PC-9 (cell line): ENCODE measurements at regions of chr7 and their contacts with region 1.

Region 1: DNA sequence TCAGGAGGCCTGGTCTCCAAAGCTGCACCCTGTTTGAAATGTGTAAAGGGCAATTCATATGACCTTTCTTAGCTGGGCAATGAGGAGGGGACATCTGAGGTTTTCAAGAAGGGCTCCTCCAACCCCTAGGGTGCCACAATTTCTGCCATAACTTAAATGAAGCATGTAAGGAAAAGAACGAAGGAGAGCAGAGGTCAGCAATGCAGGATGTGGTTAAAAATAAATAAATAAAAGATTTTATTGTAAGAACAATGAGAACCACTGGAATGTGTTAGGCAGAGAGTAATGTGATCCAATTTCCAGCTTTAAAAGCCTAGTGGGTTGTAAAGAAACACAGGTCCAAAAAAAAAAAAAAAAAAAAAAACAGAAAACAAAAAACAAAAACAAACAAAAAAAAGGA is 673.1 kb downstream of the TNS3 start:
- DNase-seq: peak; percentile 53 to 88
- H3K4me3 ChIP-seq: no peak overlapping the region
- H3K27ac ChIP-seq: no peak overlapping the region
- H3K4me1 ChIP-seq: peaks cover 17% of the 10 kb centered on the region
- H3K27me3 ChIP-seq: no peaks in the 10 kb centered on the region
- CTCF ChIP-seq: no peak

Region 2: GRCh38 chr7:46764100-46764936 is 144.5 kb before region 1 on chr7:
- CTCF ChIA-PET with region 1: no interaction called
- POLR2A ChIA-PET with region 1: no interaction called
- intact Hi-C with region 1: loop called (anchors 2 kb)
- DNase-seq: peak; percentile 82 to 95
- H3K4me3 ChIP-seq: no peak overlapping the region
- H3K27ac ChIP-seq: peak overlapping the region; percentile 69
- H3K4me1 ChIP-seq: peaks cover 32% of the 10 kb centered on the region
- H3K27me3 ChIP-seq: no peaks in the 10 kb centered on the region
- CTCF ChIP-seq: no peak

Region 3: DNA sequence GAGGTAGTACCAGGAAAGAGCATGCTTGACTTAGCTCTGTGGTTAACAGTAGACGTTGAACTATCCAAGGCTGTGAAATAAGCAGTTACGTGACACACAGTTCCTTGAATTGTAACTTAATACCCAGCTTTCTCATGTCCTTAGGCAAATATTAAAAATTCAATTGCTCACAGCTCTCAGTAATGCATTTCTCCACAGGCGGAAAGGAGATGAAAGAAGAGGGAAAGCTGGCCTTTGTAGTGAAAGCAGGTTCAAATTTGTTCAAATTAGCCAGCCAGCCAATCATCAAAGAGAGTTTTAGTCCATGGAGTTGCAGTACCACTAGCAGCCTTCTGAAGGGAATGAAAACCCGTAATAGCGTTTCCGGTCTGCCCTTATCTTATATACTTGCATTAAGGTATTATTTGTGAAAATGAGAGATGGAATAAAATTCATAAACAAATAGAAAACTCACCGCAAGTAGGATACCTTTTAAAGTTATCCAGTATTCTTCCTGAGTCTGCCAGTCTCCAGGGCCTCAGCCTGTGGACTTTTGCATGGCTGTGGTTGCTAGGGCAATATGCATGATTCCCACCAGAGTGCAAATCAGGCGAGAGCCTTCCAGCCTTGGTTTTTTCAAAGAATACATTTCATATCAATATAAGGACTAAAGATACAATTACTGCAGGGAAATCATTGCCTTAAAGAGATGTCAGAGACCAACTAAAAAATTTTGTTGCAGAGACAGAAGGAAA is 122.4 kb before region 1 on chr7:
- CTCF ChIA-PET with region 1: interaction called, 19 read pairs
- POLR2A ChIA-PET with region 1: no interaction called
- intact Hi-C with region 1: no loop called
- DNase-seq: peak; percentile 40 to 95
- H3K4me3 ChIP-seq: no peak overlapping the region
- H3K27ac ChIP-seq: peak overlapping the region; percentile 60
- H3K4me1 ChIP-seq: peaks cover 35% of the 10 kb centered on the region
- H3K27me3 ChIP-seq: no peaks in the 10 kb centered on the region
- CTCF ChIP-seq: no peak

Region 4: DNA sequence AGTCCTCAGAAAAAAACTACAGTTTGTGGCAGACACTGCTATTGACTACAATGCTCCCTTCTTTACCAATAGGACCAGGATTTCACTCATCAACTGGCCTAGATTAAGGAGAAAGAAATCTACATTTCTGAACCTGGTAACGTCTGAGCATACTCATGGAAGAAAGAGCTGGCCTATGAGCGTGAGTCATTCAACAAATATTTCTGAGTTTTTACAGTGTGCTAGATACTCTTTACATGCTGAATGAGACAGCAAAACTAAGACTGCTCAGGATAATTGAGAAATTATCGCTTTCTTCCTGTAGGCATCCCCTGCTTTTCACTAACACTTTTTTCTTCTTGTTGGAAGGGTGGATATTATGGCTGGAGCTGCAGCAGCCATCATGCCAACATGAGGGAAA is 63.4 kb after region 1 on chr7:
- CTCF ChIA-PET with region 1: no interaction called
- POLR2A ChIA-PET with region 1: interaction called, 18 read pairs
- intact Hi-C with region 1: no loop called
- DNase-seq: peak; percentile 24 to 79
- H3K4me3 ChIP-seq: no peak overlapping the region
- H3K27ac ChIP-seq: peak overlapping the region; percentile 50
- H3K4me1 ChIP-seq: peaks cover 24% of the 10 kb centered on the region
- H3K27me3 ChIP-seq: no peaks in the 10 kb centered on the region
- CTCF ChIP-seq: no peak

Region 5: GRCh38 chr7:47100817-47101435 is 192.2 kb after region 1 on chr7:
- CTCF ChIA-PET with region 1: interaction called, 12 read pairs
- POLR2A ChIA-PET with region 1: no interaction called
- intact Hi-C with region 1: no loop called
- DNase-seq: peak; percentile 61
- H3K4me3 ChIP-seq: peak overlapping the region; percentile 16; the same call in 1 of the 2 replicates
- H3K27ac ChIP-seq: no peak overlapping the region
- H3K4me1 ChIP-seq: no peaks in the 10 kb centered on the region
- H3K27me3 ChIP-seq: no peaks in the 10 kb centered on the region
- CTCF ChIP-seq: peak; percentile 84

Region 6: GRCh38 chr7:47622946-47623640 is 714.3 kb after region 1 on chr7:
- CTCF ChIA-PET with region 1: no interaction called
- POLR2A ChIA-PET with region 1: no interaction called
- intact Hi-C with region 1: no loop called
- DNase-seq: peak in 1 of 2 experiments; percentile 58
- H3K4me3 ChIP-seq: no peak overlapping the region
- H3K27ac ChIP-seq: no peak overlapping the region
- H3K4me1 ChIP-seq: peaks cover 10% of the 10 kb centered on the region
- H3K27me3 ChIP-seq: no peaks in the 10 kb centered on the region
- CTCF ChIP-seq: no peak